MCF 10A (cell line): ENCODE measurements at regions of chr1 and their contacts with region 1.

Region 1: GRCh38 chr1:236904874-236905741 is 99.1 kb downstream of the MT1HL1 start:
- DNase-seq: peak; percentile 96
- H3K4me3 Mint-ChIP-seq: no peak overlapping the region
- H3K27ac Mint-ChIP-seq: no peak overlapping the region
- H3K4me1 Mint-ChIP-seq: peaks cover 11% of the 10 kb centered on the region
- H3K27me3 Mint-ChIP-seq: no peaks in the 10 kb centered on the region
- CTCF ChIP-seq: no peak

Region 2: DNA sequence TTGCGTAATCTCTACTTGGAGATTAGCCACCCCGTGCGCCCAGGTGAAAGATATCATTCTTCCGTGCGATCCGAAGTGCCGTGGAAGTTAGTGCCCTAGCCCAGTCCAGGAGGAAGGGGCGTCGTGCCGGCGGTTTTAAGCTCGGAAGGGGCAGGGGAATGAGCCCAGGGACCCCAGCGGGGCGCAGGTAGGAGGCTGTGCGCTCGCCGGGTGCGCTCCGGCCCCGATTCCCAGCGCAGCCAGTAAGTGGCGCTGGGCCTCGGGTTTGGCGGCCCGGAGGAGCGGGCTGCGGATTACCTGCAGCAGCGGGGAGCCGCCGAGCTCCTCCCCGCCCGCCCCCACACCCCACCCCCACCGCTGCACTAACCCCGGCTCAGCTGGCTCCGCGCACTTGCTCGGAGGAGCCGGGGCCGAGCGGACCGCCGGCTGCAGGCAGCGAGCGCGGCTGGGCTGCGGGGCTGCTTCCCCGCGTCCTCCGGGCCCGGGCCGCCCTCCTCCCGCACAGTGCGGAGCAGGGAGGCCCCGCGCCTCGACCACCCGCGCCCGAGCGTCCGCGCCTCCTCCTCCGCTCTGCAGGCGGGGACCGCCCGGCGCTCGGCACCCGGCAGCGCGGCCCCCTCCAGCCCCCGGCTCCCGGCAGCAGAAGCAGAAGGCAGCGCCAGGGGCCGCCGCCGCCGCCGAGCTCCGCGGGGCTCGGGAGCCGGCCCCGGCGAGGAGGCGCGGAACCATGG is 136.9 kb after region 1 on chr1 and contains the start of gene RYR2:
- CTCF ChIA-PET with region 1: no interaction called
- POLR2A ChIA-PET with region 1: no interaction called
- intact Hi-C with region 1: no loop called
- DNase-seq: no peak
- H3K4me3 Mint-ChIP-seq: no peak within 1 kb of the TSS
- H3K27ac Mint-ChIP-seq: no peak within 1 kb of the TSS
- H3K4me1 Mint-ChIP-seq: peaks cover 5% of the 10 kb centered on the region
- H3K27me3 Mint-ChIP-seq: no peaks in the 10 kb centered on the region
- CTCF ChIP-seq: no peak
- total RNA-seq, gene RYR2: 4.0 and 5.3 TPM in 2 replicates

Region 3: DNA sequence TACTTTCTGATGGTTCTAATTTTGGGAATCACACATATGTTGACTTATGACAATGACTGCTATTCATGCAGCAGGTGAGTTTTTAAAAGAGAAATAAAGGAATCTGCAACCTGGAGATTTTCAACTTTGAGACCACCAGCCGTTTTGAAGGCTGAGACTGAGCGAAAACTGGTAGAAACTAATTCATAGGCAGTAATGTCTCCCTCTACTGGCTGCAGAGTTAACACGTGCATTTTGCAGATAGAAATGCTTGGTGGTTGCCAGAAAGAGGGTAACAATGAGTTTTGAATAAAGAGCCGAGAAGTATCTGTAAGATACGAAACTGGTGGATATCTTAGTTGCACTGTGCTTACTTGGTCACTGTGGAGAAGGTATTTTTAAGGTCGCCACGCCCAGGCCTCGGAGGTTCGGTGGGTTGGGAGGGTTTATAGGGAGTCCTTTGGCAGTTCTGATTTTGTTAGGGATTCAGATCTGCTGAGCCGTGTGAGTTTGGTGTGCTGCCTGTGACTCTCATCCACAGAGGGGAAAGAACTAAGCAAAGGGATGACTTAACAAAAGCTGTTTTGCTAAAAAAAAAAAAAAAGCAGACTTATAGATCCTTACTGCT is 219.9 kb after region 1 on chr1:
- CTCF ChIA-PET with region 1: no interaction called
- POLR2A ChIA-PET with region 1: interaction called, 3 read pairs
- intact Hi-C with region 1: loop called (anchors 10 kb)
- DNase-seq: peak; percentile 65
- H3K4me3 Mint-ChIP-seq: no peak overlapping the region
- H3K27ac Mint-ChIP-seq: no peak overlapping the region
- H3K4me1 Mint-ChIP-seq: no peaks in the 10 kb centered on the region
- H3K27me3 Mint-ChIP-seq: peaks cover 13% of the 10 kb centered on the region
- CTCF ChIP-seq: peak; percentile 80

Region 4: DNA sequence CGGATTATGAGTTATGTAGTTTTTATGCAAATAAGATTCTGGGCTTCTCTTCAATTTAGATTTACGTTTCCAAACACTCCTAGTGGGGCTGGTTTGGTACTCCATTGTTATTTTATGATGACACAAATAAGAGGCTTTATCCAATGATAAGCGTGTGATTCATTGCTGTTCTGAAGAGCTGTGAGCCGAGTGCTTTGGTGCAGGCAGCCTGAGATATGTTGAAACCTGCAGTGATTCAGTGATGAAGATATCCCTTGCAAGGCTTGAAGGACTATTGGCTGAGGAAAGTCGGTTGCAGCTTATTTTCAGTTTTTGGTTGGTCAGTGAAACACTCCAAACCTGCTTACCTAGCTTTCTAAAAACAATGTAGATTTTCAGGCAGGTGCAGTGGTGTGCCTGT is 249.0 kb after region 1 on chr1:
- CTCF ChIA-PET with region 1: interaction called, 3 read pairs
- POLR2A ChIA-PET with region 1: no interaction called
- intact Hi-C with region 1: loop called (anchors 5 kb)
- DNase-seq: peak; percentile 96
- H3K4me3 Mint-ChIP-seq: no peak overlapping the region
- H3K27ac Mint-ChIP-seq: no peak overlapping the region
- H3K4me1 Mint-ChIP-seq: peaks cover 19% of the 10 kb centered on the region
- H3K27me3 Mint-ChIP-seq: no peaks in the 10 kb centered on the region
- CTCF ChIP-seq: no peak